Left ventricle myocardium superior (tissue), 1 donor: ENCODE measurements at regions of chr6 and their contacts with region 1.

Region 1: GRCh38 chr6:41941280-41942066 is at the start of gene CCND3:
- DNase-seq: peak; percentile 97
- ATAC-seq: peak; percentile 92
- total RNA-seq, gene CCND3: 52.7 TPM

Region 2: GRCh38 chr6:41878246-41878645 is 63.2 kb before region 1 on chr6:
- intact Hi-C with region 1: no loop called
- DNase-seq: no peak
- ATAC-seq: no peak

Region 3: DNA sequence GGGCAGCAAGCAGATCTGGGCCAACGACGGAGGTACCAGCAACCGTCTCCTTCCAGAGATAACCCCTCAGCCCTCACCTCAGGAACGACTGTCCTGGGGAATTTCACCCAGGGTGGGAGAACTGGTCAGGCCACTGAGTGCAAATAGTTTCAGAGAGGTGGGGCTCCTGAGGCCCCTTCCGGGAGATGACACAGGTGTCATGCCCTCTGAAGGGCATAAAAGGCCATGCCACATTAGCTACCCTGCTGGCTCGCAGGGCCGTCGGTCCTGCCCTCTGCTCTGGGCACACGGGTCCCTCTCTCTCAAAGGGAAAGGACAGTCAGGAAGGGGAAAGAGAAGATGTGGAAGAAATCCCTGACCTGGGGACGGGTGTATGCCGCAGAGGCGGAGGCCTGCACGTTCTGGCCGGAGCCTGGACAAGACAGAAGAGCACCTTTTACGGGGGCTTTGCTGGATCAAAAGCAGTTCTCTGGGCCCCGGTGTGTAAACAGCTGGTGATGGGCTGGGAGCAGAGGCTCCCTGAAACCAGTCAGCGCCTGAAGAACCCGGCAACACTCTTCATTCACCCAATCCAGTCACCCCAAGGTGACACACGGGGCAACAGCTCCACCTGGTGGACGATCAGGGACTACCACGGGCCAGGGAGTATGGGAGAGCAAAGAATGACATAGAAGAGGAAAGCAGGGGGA is 102.5 kb after region 1 on chr6:
- intact Hi-C with region 1: loop called (anchors 5 kb)
- DNase-seq: peak; percentile 89
- ATAC-seq: peak; percentile 58

Region 4: GRCh38 chr6:42086046-42087035 is 144.9 kb after region 1 on chr6:
- intact Hi-C with region 1: no loop called
- DNase-seq: peak; percentile 54
- ATAC-seq: peak; percentile 50